Naive thymus-derived CD4-positive, alpha-beta T cell (primary cell): ENCODE measurements at regions of chr17 and their contacts with region 1.

Region 1: GRCh38 chr17:80575057-80575875 is 30.6 kb downstream of the RPTOR start:
- DNase-seq: peak; percentile 72 to 89 (median 83)
- ATAC-seq: peak; percentile 100
- H3K4me3 ChIP-seq: no peak overlapping the region
- H3K4me3 Mint-ChIP-seq: peak overlapping the region in 2 of 10 donors; percentile 10 to 36
- H3K27ac ChIP-seq: no peak overlapping the region
- H3K27ac Mint-ChIP-seq: peak overlapping the region in 4 of 9 donors; percentile 12 to 31 (median 13)
- H3K4me1 ChIP-seq: no peaks in the 10 kb centered on the region
- H3K4me1 Mint-ChIP-seq: peaks cover 11 to 46% (median 30%) of the 10 kb centered on the region in 7 donors
- H3K27me3 ChIP-seq: no peaks in the 10 kb centered on the region
- H3K27me3 Mint-ChIP-seq: no peaks in the 10 kb centered on the region

Region 2: GRCh38 chr17:80426681-80427326 is 148.5 kb before region 1 on chr17:
- CTCF ChIA-PET with region 1: interaction called, 4 read pairs
- POLR2A ChIA-PET with region 1: no interaction called
- intact Hi-C with region 1: loop called (anchors 1 kb)
- DNase-seq: peak; percentile 72 to 91 (median 86)
- ATAC-seq: peak; percentile 99
- H3K4me3 ChIP-seq: no peak overlapping the region
- H3K4me3 Mint-ChIP-seq: peak overlapping the region in 1 of 10 donors; percentile 5
- H3K27ac ChIP-seq: no peak overlapping the region
- H3K27ac Mint-ChIP-seq: peak overlapping the region in 1 of 9 donors; percentile 11
- H3K4me1 ChIP-seq: peaks cover 8 to 11% of the 10 kb centered on the region in 2 donors
- H3K4me1 Mint-ChIP-seq: peaks cover 4 to 16% (median 5%) of the 10 kb centered on the region in 7 donors
- H3K27me3 ChIP-seq: no peaks in the 10 kb centered on the region
- H3K27me3 Mint-ChIP-seq: no peaks in the 10 kb centered on the region

Region 3: GRCh38 chr17:80544655-80545498 is 30.4 kb before region 1 on chr17 and contains the start of gene RPTOR:
- CTCF ChIA-PET with region 1: no interaction called
- POLR2A ChIA-PET with region 1: no interaction called
- intact Hi-C with region 1: loop called in 1 of 2 experiments (anchors 2 kb)
- DNase-seq: peak; percentile 71 to 91 (median 86)
- ATAC-seq: peak; percentile 100
- H3K4me3 ChIP-seq: peak within 1 kb of the TSS; percentile 97
- H3K4me3 Mint-ChIP-seq: peak within 1 kb of the TSS; percentile 88 to 97 (median 94)
- H3K27ac ChIP-seq: peak within 1 kb of the TSS; percentile 79
- H3K27ac Mint-ChIP-seq: peak within 1 kb of the TSS; percentile 85 to 97 (median 93)
- H3K4me1 ChIP-seq: peaks cover 13 to 15% of the 10 kb centered on the region in 2 donors
- H3K4me1 Mint-ChIP-seq: peaks cover 17 to 39% (median 32%) of the 10 kb centered on the region in 7 donors
- H3K27me3 ChIP-seq: no peaks in the 10 kb centered on the region
- H3K27me3 Mint-ChIP-seq: peaks cover 0 to 4% (median 3%) of the 10 kb centered on the region in 5 donors
- total RNA-seq, gene RPTOR: 53.7 to 89.8 (median 69.5) TPM

Region 4: DNA sequence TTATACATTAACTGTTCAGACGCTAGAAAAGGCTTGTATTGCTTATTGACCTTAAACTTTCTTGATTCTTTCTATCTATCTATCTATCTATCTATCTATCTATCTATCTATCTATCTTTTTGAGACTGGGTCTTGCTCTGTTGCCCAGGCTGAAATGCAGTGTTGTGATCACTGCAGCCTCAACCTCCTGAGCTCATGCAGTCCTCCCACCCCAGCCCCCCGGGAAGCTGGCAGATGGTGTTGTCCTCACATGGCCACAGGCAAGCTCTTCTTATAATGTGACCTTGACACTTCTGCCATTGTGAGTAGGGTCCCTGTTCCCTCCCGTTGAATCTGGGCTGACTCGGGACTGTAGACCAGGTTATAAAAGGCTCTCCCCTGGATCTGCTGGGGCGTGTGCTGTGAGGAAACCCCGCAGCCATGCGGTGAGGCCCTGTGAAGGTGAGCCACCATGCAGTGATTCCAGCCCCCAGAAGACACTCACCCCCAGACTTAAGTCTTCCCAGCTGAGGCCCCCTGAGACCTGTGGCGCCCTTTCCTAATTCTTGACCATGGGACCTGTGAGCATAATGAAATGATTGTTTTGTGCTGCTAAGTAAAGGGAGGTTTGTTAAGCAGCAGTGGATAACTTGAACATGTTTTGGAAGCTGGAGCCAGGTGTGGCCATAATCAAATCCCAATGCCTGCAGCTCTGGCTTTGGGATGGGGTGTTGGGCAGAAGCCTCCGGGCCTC is 23.7 kb after region 1 on chr17:
- CTCF ChIA-PET with region 1: no interaction called
- POLR2A ChIA-PET with region 1: no interaction called
- intact Hi-C with region 1: no loop called
- DNase-seq: no peak
- ATAC-seq: no peak
- H3K4me3 ChIP-seq: no peak overlapping the region
- H3K4me3 Mint-ChIP-seq: peak overlapping the region in 2 of 10 donors; percentile 26 to 50
- H3K27ac ChIP-seq: no peak overlapping the region
- H3K27ac Mint-ChIP-seq: peak overlapping the region in 6 of 9 donors; percentile 22 to 87 (median 72)
- H3K4me1 ChIP-seq: peaks cover 10 to 26% of the 10 kb centered on the region in 2 donors
- H3K4me1 Mint-ChIP-seq: peaks cover 39 to 89% (median 74%) of the 10 kb centered on the region in 7 donors
- H3K27me3 ChIP-seq: no peaks in the 10 kb centered on the region
- H3K27me3 Mint-ChIP-seq: no peaks in the 10 kb centered on the region

Region 5: DNA sequence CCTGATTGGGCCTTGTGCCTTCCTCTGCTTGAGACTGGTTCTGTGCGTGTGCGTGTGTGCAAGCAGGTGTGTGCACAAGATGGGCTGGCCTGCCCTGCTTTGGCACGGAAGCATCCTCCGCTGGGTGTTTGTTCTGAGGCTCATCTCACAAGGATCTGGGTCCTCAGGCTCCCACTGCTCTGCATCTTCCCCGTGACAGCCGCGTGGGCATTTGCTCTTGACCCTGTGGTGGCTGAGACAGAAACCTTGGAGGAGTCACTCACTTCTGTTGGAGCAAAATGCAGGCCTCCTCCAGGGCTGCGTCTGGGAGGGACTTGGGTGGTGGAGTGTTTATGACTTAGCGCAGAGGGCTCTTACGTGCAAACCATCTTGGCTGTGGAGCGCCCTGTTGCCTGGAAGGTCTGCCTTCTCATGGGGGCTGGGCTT is 88.5 kb after region 1 on chr17:
- CTCF ChIA-PET with region 1: interaction called, 3 read pairs
- POLR2A ChIA-PET with region 1: no interaction called
- intact Hi-C with region 1: loop called in 1 of 2 experiments (anchors 1 kb)
- DNase-seq: peak in 8 of 9 donors; percentile 48 to 79 (median 60)
- ATAC-seq: peak; percentile 63
- H3K4me3 ChIP-seq: peak overlapping the region; percentile 40
- H3K4me3 Mint-ChIP-seq: peak overlapping the region; percentile 69 to 95 (median 82)
- H3K27ac ChIP-seq: peak overlapping the region; percentile 94
- H3K27ac Mint-ChIP-seq: peak overlapping the region; percentile 91 to 100 (median 96)
- H3K4me1 ChIP-seq: peaks cover 36 to 58% of the 10 kb centered on the region in 2 donors
- H3K4me1 Mint-ChIP-seq: peaks cover 52 to 88% (median 79%) of the 10 kb centered on the region in 7 donors
- H3K27me3 ChIP-seq: no peaks in the 10 kb centered on the region
- H3K27me3 Mint-ChIP-seq: no peaks in the 10 kb centered on the region

Region 6: DNA sequence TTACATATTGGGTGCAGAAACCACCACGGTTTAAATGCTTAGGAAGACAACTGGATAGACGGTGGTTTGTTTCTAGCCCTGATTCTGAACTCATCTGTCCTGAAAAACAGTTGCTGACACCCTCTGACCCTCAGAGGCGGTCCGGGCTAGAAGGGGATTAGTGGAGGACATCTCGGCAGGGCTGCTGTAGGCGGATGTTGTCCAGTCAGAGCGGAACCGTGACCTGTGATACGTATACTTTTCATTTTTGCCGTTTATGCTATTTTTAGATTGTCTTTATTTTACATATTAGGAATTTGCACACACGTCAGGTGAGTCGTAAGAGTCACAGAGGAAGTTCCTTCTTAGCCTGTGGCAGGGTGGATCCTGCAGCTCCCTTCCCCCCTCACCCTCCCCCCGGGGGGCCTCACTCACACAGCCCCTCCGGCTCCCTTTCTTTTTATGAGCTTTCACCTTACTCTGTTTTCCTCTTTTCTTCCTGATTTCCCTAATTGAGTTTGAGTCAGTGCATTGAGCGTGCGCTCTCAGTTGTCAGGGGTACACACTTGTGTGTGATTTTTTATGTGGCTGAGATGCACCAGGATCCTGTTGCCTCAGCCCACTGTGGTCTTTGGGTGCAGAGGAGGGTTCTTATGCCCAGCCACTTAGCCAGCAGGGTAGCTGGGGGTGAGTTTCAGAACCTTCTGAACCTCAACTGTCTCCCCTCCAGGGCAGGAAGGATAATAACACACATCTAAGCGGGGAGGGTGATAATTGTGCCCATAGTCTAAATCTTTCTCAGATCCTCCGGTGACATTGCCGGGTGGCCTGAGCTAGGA is 205.3 kb after region 1 on chr17:
- CTCF ChIA-PET with region 1: interaction called, 3 read pairs
- POLR2A ChIA-PET with region 1: no interaction called
- intact Hi-C with region 1: loop called in 1 of 2 experiments (anchors 1 kb)
- DNase-seq: peak in 3 of 9 donors; percentile 29 to 57 (median 43)
- ATAC-seq: peak; percentile 40
- H3K4me3 ChIP-seq: peak overlapping the region; percentile 45
- H3K4me3 Mint-ChIP-seq: peak overlapping the region; percentile 62 to 96 (median 82)
- H3K27ac ChIP-seq: peak overlapping the region; percentile 70
- H3K27ac Mint-ChIP-seq: peak overlapping the region; percentile 87 to 99 (median 94)
- H3K4me1 ChIP-seq: peaks cover 38 to 57% of the 10 kb centered on the region in 2 donors
- H3K4me1 Mint-ChIP-seq: peaks cover 30 to 90% (median 77%) of the 10 kb centered on the region in 7 donors
- H3K27me3 ChIP-seq: no peaks in the 10 kb centered on the region
- H3K27me3 Mint-ChIP-seq: no peaks in the 10 kb centered on the region

Region 7: DNA sequence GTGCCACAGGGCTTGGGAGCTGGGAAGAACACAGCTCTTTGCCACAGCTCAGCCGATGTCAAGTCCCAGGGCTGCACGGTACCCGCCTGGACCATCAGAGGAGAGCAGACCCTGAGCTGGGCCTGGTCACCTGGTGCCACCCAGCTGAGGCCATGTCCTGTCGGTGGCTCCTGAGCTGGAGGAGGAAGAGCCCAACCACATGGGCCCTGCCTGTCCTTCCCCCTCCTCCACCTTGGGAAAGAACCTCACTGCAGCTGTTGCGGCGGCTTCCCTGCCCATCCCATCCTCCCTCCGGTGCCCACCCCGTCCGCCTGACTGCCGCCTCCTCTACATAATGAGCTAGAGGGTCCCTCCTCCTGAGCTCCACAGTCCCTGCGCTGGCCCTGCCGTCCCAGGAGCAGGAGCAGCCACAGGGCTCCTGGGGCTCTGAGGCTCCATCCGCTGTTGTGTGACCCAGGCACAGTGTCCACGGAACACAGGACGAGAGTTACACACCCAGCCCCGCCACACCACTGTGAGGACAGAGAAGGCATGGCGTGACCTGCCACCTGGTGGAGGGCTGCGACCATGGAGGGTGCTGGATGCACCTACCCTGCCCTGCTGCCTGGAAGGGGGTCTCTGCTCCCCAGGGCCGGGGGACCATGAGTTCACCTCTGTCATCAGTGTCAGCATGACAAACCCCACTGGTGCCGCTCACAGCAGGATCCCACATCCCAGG is 394.9 kb after region 1 on chr17:
- CTCF ChIA-PET with region 1: no interaction called
- POLR2A ChIA-PET with region 1: no interaction called
- intact Hi-C with region 1: loop called in 1 of 2 experiments (anchors 1 kb)
- DNase-seq: peak in 8 of 9 donors; percentile 23 to 49 (median 41)
- ATAC-seq: peak; percentile 80
- H3K4me3 ChIP-seq: no peak overlapping the region
- H3K4me3 Mint-ChIP-seq: peak overlapping the region in 5 of 10 donors; percentile 11 to 56 (median 24)
- H3K27ac ChIP-seq: no peak overlapping the region
- H3K27ac Mint-ChIP-seq: peak overlapping the region in 6 of 9 donors; percentile 37 to 86 (median 50)
- H3K4me1 ChIP-seq: peaks cover 0 to 20% of the 10 kb centered on the region in 2 donors
- H3K4me1 Mint-ChIP-seq: peaks cover 5 to 14% (median 6%) of the 10 kb centered on the region in 7 donors
- H3K27me3 ChIP-seq: no peaks in the 10 kb centered on the region
- H3K27me3 Mint-ChIP-seq: peaks cover 0 to 9% (median 0%) of the 10 kb centered on the region in 5 donors